Panc1 (cell line): ENCODE measurements at regions of chr2 and their contacts with region 1.

Region 1: GRCh38 chr2:79219383-79219988 is 59.9 kb upstream of the REG3A start:
- DNase-seq: peak; percentile 32
- ATAC-seq: no peak
- H3K4me3 ChIP-seq: no peak overlapping the region
- H3K27ac ChIP-seq: no peak overlapping the region
- H3K4me1 ChIP-seq: no peaks in the 10 kb centered on the region
- H3K27me3 ChIP-seq: no peaks in the 10 kb centered on the region
- CTCF ChIP-seq: peak; percentile 82

Region 2: DNA sequence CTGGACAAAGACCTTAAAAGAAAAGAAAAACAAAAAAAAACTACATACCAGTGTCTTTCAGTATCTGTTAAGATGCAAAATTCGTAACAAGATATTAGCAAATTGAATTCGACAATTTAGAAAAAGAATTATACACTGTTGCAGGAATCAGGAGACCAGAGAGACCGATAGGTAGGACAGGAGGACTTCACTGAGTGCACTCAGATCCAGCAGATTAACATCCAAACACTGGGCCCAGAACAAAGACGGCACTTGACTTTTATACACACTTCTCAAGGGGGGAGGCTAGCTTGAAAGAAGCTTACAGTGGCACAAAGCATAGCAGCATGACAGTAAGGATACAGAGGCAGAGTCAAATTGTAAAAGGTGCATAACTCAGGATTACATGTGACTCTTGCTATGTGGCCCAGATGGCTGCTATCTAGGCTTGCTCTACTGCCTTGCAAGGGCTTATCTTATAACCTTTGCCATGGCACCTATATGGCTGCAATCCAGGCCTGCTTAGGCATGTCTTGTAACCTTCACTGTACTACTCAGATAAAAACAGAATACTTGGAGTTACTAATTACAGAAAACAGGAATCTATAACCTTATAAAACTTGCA is 1190.0 kb before region 1 on chr2:
- CTCF ChIA-PET with region 1: no interaction called
- POLR2A ChIA-PET with region 1: no interaction called
- in situ Hi-C with region 1: no loop called
- intact Hi-C with region 1: no loop called
- DNase-seq: no peak
- ATAC-seq: no peak
- H3K4me3 ChIP-seq: no peak overlapping the region
- H3K27ac ChIP-seq: no peak overlapping the region
- H3K4me1 ChIP-seq: no peaks in the 10 kb centered on the region
- H3K27me3 ChIP-seq: no peaks in the 10 kb centered on the region
- CTCF ChIP-seq: no peak

Region 3: GRCh38 chr2:78992451-78992806 is 227.1 kb before region 1 on chr2:
- CTCF ChIA-PET with region 1: no interaction called
- POLR2A ChIA-PET with region 1: no interaction called
- in situ Hi-C with region 1: no loop called
- intact Hi-C with region 1: loop called (anchors 5 kb)
- DNase-seq: no peak
- ATAC-seq: peak; percentile 89
- H3K4me3 ChIP-seq: peak overlapping the region; percentile 9 to 18; a peak in 3 of 4 replicates
- H3K27ac ChIP-seq: no peak overlapping the region
- H3K4me1 ChIP-seq: no peaks in the 10 kb centered on the region
- H3K27me3 ChIP-seq: peaks cover 5% of the 10 kb centered on the region
- CTCF ChIP-seq: peak; percentile 77

Region 4: GRCh38 chr2:79041032-79041448 is 178.4 kb before region 1 on chr2:
- CTCF ChIA-PET with region 1: no interaction called
- POLR2A ChIA-PET with region 1: no interaction called
- in situ Hi-C with region 1: no loop called
- intact Hi-C with region 1: loop called (anchors 5 kb)
- DNase-seq: no peak
- ATAC-seq: peak; percentile 78
- H3K4me3 ChIP-seq: no peak overlapping the region
- H3K27ac ChIP-seq: no peak overlapping the region
- H3K4me1 ChIP-seq: no peaks in the 10 kb centered on the region
- H3K27me3 ChIP-seq: no peaks in the 10 kb centered on the region
- CTCF ChIP-seq: peak; percentile 67; the same call in 1 of the 2 replicates

Region 5: GRCh38 chr2:79097843-79098242 is 121.6 kb before region 1 on chr2:
- CTCF ChIA-PET with region 1: no interaction called
- POLR2A ChIA-PET with region 1: no interaction called
- in situ Hi-C with region 1: no loop called
- intact Hi-C with region 1: no loop called
- DNase-seq: no peak
- ATAC-seq: no peak
- H3K4me3 ChIP-seq: no peak overlapping the region
- H3K27ac ChIP-seq: no peak overlapping the region
- H3K4me1 ChIP-seq: no peaks in the 10 kb centered on the region
- H3K27me3 ChIP-seq: no peaks in the 10 kb centered on the region
- CTCF ChIP-seq: no peak

Region 6: DNA sequence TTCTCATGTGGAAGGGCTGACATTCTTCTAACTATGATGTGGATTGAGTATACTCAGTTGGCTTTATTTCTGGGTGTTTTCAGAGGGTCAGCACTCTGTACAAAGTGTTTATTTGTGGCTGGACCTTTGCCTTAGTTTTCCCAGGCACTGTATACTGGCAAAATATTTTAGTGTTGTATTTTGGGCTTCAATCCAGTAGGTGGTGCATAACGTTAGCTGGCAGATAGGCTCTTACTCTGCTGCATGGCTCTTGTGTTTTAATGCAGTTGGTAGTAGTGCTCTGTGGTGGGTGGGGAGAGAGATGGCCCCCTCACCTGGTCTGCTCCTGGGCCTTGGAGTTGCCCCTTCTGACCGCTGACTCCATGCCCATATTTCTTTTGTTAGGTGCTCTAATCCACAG is 15.6 kb after region 1 on chr2:
- CTCF ChIA-PET with region 1: no interaction called
- POLR2A ChIA-PET with region 1: no interaction called
- in situ Hi-C with region 1: no loop called
- intact Hi-C with region 1: no loop called
- DNase-seq: no peak
- ATAC-seq: no peak
- H3K4me3 ChIP-seq: no peak overlapping the region
- H3K27ac ChIP-seq: no peak overlapping the region
- H3K4me1 ChIP-seq: no peaks in the 10 kb centered on the region
- H3K27me3 ChIP-seq: no peaks in the 10 kb centered on the region
- CTCF ChIP-seq: peak; percentile 40

Region 7: GRCh38 chr2:79585701-79586433 is 366.4 kb after region 1 on chr2:
- CTCF ChIA-PET with region 1: no interaction called
- POLR2A ChIA-PET with region 1: no interaction called
- in situ Hi-C with region 1: no loop called
- intact Hi-C with region 1: no loop called
- DNase-seq: peak; percentile 27
- ATAC-seq: no peak
- H3K4me3 ChIP-seq: no peak overlapping the region
- H3K27ac ChIP-seq: no peak overlapping the region
- H3K4me1 ChIP-seq: no peaks in the 10 kb centered on the region
- H3K27me3 ChIP-seq: no peaks in the 10 kb centered on the region
- CTCF ChIP-seq: no peak

Region 8: DNA sequence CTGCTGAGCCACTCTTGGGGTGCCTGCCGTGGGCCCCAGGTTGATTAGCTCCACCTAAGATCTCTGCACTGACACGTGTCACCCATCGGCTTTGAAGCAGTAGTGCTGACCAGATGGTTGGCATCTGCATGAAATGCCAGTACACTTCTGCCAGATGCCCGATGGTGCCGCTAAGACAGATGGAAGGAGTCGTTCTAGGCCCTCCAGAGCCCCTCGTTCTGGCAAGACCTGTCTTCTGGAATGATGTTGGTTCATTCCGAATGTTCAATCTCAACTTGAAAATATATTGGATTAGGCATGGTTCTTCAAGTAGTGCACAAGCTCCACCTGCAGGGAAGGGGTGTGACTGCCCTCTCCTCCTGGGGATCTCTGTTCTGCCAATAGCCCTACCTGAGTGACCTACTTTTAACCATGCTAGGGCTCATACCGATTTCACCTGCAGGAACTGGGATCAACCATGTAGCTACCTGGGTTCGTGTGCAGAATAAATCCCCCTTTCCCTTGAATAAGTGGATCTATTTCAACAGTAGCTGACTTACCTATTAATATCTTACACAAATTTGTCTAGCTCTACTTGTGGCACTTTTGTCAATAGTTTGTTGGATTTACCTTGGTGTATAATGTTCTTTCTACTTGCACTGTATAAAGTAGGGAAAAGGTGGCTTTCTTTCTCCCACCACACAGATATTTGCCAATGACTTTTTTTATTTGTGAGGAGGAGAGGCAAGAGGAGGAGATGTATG is 635.9 kb after region 1 on chr2:
- CTCF ChIA-PET with region 1: no interaction called
- POLR2A ChIA-PET with region 1: no interaction called
- in situ Hi-C with region 1: no loop called
- intact Hi-C with region 1: loop called (anchors 5 kb)
- DNase-seq: no peak
- ATAC-seq: peak; percentile 78
- H3K4me3 ChIP-seq: no peak overlapping the region
- H3K27ac ChIP-seq: no peak overlapping the region
- H3K4me1 ChIP-seq: no peaks in the 10 kb centered on the region
- H3K27me3 ChIP-seq: no peaks in the 10 kb centered on the region
- CTCF ChIP-seq: peak; percentile 74